Astrocyte of the cerebellum (primary cell): ENCODE measurements at regions of chr14 and their contacts with region 1.

Region 1: DNA sequence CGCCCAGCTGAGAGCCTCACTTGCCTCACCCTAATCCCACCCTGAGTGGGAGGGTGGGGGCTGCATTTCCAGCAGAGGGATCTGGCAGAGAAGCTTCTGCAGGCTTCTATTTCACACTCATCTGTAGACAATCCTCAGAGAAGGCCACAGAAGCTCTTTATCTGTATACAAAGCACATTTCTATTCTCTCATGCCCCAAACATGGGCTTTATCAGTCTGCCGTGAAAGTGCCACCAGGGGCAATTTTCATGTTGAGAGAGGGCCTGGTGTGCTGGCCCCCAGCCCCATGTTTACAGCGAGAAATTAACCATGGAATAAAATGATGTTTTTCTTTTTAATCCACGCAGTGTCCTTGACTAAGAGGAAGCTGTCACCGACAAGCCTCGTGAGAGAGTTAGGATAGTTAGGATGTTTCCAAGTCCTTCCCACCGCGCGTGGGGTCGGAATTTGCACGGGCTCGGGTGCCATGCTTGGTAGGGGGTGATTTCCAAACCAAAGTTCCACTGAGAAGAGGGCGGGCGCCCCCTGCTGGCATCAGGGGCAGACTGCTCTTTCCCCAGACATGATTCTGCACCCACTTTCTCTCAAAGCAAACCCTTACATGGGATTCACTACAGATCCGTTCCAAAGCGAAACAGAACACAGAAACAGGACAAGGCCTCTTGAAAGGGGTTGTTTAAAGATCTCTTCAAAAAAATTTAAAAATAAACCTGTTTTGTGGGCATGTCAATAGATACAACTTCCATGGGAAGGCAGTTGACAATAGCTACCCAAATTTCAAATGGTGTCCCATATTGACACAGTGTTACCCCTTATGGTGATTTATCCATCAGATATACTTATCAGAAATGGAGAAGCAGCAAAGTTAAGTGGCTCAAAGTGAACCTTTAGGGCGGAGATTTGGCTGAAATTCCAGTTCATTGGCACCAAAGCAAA is 19.4 kb downstream of the BDKRB1 start:
- DNase-seq: peak; percentile 43
- H3K4me3 ChIP-seq: no peak overlapping the region
- CTCF ChIP-seq: peak; percentile 96

Region 2: GRCh38 chr14:96001866-96002497 is 273.5 kb before region 1 on chr14:
- in situ Hi-C with region 1: loop called (anchors 10 kb)
- DNase-seq: no peak
- H3K4me3 ChIP-seq: no peak overlapping the region
- CTCF ChIP-seq: no peak

Region 3: DNA sequence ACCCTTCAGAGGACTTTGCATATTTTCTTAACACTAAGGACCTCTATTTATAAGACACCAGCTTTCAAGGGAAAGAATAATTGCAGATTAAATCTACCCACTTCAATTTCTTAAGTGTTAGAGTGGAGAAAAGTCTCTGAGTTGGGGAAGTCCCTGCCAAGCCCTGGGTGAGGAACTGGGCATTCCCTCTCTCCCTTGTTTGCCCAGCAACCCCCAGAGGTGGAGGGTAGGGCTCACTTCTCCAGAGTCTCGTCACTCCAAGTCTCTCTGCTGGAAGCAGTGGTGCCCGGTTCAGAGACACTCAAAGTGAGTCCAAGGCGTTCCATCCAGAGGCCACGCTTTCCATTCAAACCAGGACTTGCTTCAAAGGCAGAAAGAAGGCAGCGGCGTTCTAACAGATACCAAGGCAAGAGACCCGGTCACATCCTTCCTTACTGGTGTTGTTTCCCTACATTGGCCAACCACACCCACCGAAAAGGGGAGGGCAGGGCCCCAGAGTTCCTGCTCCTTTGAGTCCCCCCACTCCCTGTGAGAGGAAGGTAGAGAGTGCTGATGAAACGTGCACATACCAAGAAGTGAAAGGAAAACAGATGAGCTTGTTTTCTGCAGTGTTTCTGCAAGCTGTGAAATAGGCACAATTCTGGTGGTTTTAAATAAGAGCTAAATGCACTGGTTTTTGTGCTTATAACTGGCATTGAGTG is 76.9 kb before region 1 on chr14:
- in situ Hi-C with region 1: no loop called
- DNase-seq: no peak
- H3K4me3 ChIP-seq: no peak overlapping the region
- CTCF ChIP-seq: no peak

Region 4: DNA sequence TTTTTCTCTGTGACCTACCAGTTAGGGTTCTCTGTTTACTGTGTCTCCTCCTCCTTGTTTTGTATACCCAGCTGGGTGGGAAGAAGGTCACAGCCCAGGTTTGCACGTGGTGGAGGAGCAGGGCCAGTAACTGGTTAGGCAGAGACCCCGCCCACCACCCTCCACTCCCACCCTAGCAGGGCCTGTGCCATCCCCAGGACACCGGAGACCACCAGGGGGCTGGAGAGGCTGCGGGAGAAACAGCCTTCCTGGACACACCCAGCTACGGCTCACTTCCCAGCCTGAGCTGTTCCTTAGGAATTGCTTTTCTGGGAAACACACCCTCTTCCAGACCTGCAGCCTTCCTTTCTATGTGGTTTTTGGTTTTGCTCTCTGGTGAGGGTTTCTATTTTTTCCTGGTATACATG is 49.7 kb before region 1 on chr14:
- in situ Hi-C with region 1: no loop called
- DNase-seq: no peak
- H3K4me3 ChIP-seq: no peak overlapping the region
- CTCF ChIP-seq: no peak

Region 5: DNA sequence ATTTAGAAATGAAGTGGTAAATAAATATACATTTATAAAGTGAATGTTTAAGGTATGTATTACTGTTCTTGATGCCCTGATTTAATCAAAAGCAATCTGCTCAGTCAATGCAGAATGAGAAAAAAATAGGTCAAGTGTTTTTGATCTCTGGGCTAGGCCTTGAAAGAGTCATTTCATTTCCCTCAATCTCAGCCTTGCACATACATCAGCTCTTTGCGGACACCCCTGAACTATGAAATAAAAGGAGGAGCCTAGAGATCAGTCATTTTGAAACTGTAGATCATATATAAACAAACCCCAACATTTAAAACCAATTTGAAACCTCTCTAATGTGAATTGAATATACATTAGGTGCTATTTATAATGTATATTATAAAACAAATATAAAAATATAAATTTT is 45.2 kb after region 1 on chr14:
- in situ Hi-C with region 1: no loop called
- DNase-seq: no peak
- H3K4me3 ChIP-seq: no peak overlapping the region
- CTCF ChIP-seq: no peak